H1 (cell line): ENCODE measurements at regions of chr5 and their contacts with region 1.

Region 1: GRCh38 chr5:179697993-179698934 is 503 bp upstream of the CANX start:
- DNase-seq: peak; percentile 96 to 98
- H3K4me3 ChIP-seq: peak overlapping the region; percentile 91 to 99 (median 96)
- H3K27ac ChIP-seq: peak overlapping the region; percentile 91
- H3K4me1 ChIP-seq: peaks cover 0 to 9% (median 2%) of the 10 kb centered on the region in 4 experiments; a peak in 3 of 7 replicates
- H3K27me3 ChIP-seq: no peaks in the 10 kb centered on the region
- CTCF ChIP-seq: no peak
- EP300 ChIP-seq: no peak
- POLR2A ChIP-seq: peak; percentile 74 to 82
- RAD21 ChIP-seq: no peak

Region 2: DNA sequence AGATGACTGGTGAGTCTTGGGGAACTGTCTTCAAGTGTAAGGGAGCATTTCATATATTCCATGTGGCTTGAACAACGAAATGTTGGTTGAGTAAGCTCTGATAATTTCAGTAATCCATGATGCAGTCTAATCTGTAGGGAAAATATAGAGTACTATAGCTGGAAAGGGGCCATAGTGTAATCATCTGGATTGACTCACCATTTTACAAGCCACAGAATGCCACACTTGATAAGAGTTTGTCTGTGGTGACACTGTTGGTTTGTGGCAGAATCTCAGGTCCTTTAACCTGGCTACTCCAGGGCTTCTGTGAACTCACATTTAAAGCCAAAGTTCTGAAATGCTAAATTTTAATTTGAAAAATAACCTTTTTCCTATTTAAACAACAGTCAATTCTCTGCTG is 18.0 kb after region 1 on chr5:
- CTCF ChIA-PET with region 1: interaction called, 4 read pairs
- POLR2A ChIA-PET with region 1: interaction called, 13 read pairs
- DNase-seq: no peak
- H3K4me3 ChIP-seq: no peak overlapping the region
- H3K27ac ChIP-seq: no peak overlapping the region
- H3K4me1 ChIP-seq: no peaks in the 10 kb centered on the region
- H3K27me3 ChIP-seq: no peaks in the 10 kb centered on the region
- CTCF ChIP-seq: no peak
- EP300 ChIP-seq: no peak
- POLR2A ChIP-seq: no peak
- RAD21 ChIP-seq: no peak